Common myeloid progenitor, CD34-positive (primary cell): ENCODE measurements at regions of chr11 and their contacts with region 1.

Region 1: GRCh38 chr11:69670158-69670845 is 4.9 kb downstream of the LTO1 start:
- DNase-seq: peak; percentile 46 to 66 (median 59)
- H3K4me3 ChIP-seq: no peak overlapping the region
- H3K27ac ChIP-seq: no peak overlapping the region
- H3K4me1 ChIP-seq: peaks cover 4 to 15% (median 13%) of the 10 kb centered on the region in 4 experiments
- H3K27me3 ChIP-seq: no peaks in the 10 kb centered on the region

Region 2: DNA sequence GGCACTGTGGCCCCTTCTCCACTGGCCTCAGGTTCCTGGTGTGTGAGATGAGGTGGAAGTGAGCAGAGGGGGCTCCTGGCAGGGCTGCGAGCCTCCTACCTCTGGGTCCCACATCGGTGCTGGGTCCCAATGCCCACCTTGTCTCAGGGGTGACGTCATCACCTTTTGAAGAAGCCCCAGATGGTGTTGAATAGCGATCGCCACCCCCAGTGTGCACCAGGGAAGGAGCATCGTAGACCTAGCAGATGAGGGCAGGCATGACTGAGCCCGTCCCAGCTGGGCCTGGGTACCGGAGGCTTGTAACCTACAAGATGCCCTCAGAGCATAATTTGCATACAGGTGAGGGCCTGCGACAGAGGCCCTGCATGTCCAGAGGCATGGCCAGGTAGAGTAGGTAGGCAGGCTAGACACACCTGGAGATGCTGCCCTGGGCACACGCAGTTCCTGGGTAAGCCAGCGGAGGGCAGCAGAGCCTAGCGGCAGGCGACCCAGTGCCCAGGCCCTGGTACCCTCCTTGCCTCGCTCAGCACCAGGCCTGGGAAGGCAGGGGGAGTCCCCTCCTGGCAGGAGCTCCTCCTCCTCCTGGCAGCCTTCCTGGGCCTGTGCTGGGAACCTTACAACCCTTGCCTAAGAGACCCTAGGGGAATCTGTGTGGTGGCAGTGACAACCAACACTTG is 569.0 kb before region 1 on chr11:
- CTCF ChIA-PET with region 1: interaction called, 42 read pairs
- POLR2A ChIA-PET with region 1: no interaction called
- DNase-seq: peak; percentile 54 to 70 (median 60)
- H3K4me3 ChIP-seq: no peak overlapping the region
- H3K27ac ChIP-seq: no peak overlapping the region
- H3K4me1 ChIP-seq: peaks cover 0 to 8% (median 3%) of the 10 kb centered on the region in 4 experiments
- H3K27me3 ChIP-seq: peaks cover 0 to 26% (median 2%) of the 10 kb centered on the region in 5 experiments

Region 3: DNA sequence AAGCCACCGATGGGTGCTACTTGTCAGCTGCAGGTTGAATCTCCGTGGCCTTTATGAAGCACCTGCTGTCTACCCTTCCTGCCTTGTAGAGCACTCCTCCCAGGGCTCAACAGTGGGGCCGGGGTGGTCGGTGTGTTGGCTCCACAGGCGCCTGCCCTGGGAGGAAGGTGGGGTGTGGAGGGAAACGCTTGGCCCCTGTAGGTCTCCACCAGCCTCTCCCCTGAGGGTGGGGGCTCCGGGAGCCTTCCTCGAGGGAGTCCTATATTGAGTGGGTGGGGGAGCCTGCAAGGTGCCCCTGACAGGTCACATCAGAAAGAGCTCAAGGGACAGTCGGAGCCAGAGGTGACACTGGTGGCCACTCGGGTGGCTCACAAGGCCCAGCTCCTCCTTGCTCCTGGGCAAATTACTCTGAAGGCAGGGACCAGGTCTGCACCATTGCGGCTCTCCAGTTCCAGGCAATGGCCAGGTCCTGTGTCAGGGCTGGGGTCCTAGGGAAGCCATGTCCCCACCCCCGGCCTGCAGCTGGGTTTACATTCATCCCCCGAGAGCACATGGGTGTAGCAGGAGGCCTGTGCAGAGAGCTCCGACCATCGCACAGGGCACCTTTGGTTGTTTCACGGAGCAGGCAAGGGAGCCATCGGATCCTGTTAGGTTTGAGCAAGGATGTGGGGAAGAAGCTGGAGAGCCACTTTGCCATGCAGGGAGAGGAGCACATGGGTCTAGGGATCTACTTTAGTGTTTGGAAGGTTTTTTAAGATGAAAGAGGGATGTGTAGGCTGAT is 14.8 kb before region 1 on chr11:
- CTCF ChIA-PET with region 1: interaction called, 38 read pairs
- POLR2A ChIA-PET with region 1: no interaction called
- DNase-seq: no peak
- H3K4me3 ChIP-seq: no peak overlapping the region
- H3K27ac ChIP-seq: no peak overlapping the region
- H3K4me1 ChIP-seq: no peaks in the 10 kb centered on the region
- H3K27me3 ChIP-seq: no peaks in the 10 kb centered on the region

Region 4: GRCh38 chr11:69683764-69684333 is 13.5 kb after region 1 on chr11:
- CTCF ChIA-PET with region 1: interaction called, 10 read pairs
- POLR2A ChIA-PET with region 1: no interaction called
- DNase-seq: no peak
- H3K4me3 ChIP-seq: no peak overlapping the region
- H3K27ac ChIP-seq: no peak overlapping the region
- H3K4me1 ChIP-seq: peaks cover 0 to 3% (median 0%) of the 10 kb centered on the region in 4 experiments
- H3K27me3 ChIP-seq: peaks cover 0 to 17% (median 7%) of the 10 kb centered on the region in 5 experiments

Region 5: GRCh38 chr11:69817265-69818230 is 147.2 kb after region 1 on chr11:
- CTCF ChIA-PET with region 1: no interaction called
- POLR2A ChIA-PET with region 1: no interaction called
- DNase-seq: peak; percentile 21 to 41 (median 29)
- H3K4me3 ChIP-seq: peak overlapping the region in 2 of 7 experiments; percentile 32 to 33
- H3K27ac ChIP-seq: no peak overlapping the region
- H3K4me1 ChIP-seq: peaks cover 0 to 17% (median 12%) of the 10 kb centered on the region in 4 experiments
- H3K27me3 ChIP-seq: peaks cover 0 to 97% (median 37%) of the 10 kb centered on the region in 5 experiments